ENCODE measurements at regions of chr16 and their contacts with region 1.

Region 1: GRCh38 chr16:76518781-76519180 is 241.6 kb downstream of the CNTNAP4 start:
- DNase-seq: no peak
- H3K4me3 ChIP-seq: no peak overlapping the region
- H3K27ac ChIP-seq: no peak overlapping the region
- H3K4me1 ChIP-seq: no peaks in the 10 kb centered on the region
- H3K27me3 ChIP-seq: no peaks in the 10 kb centered on the region
- CTCF ChIP-seq: no peak

Region 2: DNA sequence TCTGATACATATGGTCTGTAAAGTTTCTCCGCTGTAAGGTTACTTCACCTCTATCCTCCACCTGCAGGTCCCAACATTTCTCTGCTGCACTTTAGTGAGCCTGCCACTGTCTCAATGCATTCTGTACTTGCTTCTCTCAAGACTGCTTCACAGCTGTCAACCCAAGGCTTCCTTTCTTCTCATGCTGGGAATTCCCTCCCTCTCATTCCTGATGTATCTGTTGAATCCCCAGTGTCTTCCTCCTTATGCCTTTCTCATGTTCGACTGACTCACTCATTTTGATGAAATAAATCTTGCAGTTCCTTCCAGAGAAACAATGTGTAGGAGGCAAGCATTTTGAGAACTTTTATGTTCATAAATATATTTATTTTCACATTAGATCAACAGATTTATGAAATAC is 46.8 kb after region 1 on chr16:
- CTCF ChIA-PET with region 1: no interaction called
- dilution Hi-C with region 1: loop called (anchors 5 kb)
- in situ Hi-C with region 1: no loop called
- intact Hi-C with region 1: no loop called
- DNase-seq: no peak
- H3K4me3 ChIP-seq: no peak overlapping the region
- H3K27ac ChIP-seq: no peak overlapping the region
- H3K4me1 ChIP-seq: no peaks in the 10 kb centered on the region
- H3K27me3 ChIP-seq: no peaks in the 10 kb centered on the region
- CTCF ChIP-seq: no peak

Measured in mammary epithelial cell (primary cell).